GM12878 (cell line): ENCODE measurements at regions of chr4 and their contacts with region 1.

Region 1: DNA sequence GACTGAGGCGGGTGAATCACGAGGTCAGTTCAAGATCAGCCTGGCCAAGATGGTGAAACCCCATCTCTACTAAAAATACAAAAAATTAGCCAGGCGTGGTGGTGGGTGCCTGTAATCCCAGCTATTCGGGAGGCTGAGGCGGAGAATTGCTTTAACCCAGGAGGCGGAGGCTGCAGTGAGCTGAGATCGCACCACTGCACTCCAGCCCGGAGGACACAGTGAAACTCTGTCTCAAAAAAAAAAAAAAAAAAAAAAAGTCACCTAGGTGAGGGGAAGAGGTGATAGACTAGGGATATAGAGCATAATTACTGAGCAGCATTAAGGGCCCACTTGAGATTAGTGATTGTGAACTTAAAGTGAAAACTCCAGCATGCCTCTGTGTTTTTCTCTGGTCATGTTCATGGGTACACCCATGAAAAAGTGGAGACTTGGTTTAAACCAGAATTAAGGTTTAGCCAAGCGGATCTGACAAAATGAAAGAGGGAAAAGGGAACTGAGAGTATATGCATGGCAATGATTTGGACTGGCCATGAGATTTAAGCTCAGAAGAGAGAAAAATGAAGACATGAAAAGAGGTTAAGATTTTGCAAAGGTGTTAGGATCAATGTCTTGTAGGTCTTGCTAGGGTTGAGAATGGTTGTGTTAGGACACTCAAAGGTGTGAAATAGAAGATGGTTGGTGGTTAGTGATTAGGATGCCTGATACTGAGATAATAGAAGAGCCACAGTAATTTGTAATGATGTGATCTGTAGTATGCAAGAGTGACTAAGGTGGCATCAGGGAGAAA is 105.0 kb downstream of the RAB28 start:
- DNase-seq: peak; percentile 24
- ATAC-seq: peak; percentile 98
- H3K4me3 ChIP-seq: no peak overlapping the region
- H3K27ac ChIP-seq: no peak overlapping the region
- H3K4me1 ChIP-seq: no peaks in the 10 kb centered on the region
- H3K27me3 ChIP-seq: no peaks in the 10 kb centered on the region
- CTCF ChIP-seq: no peak
- EP300 ChIP-seq: 0 out of 4 replicates have a peak, but pooled peaks of 1 of the 2 experiments have one; percentile 33
- POLR2A ChIP-seq: no peak
- RAD21 ChIP-seq: no peak

Region 2: DNA sequence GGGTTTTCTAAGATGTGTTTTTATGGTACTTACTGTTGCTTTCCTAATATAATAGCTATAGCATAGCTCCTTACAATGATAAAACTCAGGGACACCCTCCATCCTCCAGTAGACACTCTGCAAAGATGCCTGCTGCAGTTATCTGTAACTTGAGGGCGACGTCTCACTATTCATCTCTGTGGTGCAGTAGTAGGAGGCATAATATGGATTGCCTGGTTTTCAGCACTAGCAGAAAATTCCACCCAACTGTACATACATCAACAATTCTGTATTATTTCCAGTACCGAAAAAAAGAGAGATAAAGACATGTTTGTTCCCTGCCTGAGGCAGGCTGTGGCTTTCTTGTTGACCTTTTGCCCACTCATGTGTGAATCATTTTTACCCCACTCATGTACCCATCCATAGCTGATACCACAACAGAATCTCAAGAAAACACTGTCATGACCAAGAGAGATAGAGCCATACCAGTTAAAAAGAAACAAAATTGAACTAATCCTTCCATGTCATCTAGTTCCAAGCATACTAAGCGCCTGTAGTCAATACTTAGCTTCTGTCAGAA is 115.1 kb before region 1 on chr4:
- CTCF ChIA-PET with region 1: no interaction called
- POLR2A ChIA-PET with region 1: no interaction called
- RAD21 ChIA-PET with region 1: no interaction called
- SMC1A ChIA-PET with region 1: no interaction called
- in situ Hi-C with region 1: no loop called
- intact Hi-C with region 1: no loop called
- DNase-seq: no peak
- ATAC-seq: no peak
- H3K4me3 ChIP-seq: no peak overlapping the region
- H3K27ac ChIP-seq: no peak overlapping the region
- H3K4me1 ChIP-seq: no peaks in the 10 kb centered on the region
- H3K27me3 ChIP-seq: no peaks in the 10 kb centered on the region
- CTCF ChIP-seq: no peak
- EP300 ChIP-seq: no peak
- POLR2A ChIP-seq: no peak
- RAD21 ChIP-seq: no peak

Region 3: DNA sequence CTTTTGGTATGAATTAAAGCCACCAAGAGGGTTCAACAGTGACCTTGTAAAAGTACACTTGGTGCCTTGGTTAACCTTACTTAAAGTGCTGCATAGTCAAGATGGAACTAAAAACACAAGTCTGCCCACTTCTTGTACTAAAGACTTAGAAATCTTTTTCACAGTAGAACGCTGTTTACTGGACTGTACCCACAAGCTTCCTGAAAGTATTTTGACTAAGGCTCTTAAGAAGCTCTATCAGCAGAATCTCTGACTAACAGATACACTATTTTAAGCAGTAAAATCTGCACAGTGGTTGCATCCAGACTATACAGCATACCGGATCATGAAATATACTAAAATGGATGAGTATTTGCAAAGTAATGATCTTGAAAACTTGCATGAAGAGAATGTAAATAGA is 97.7 kb after region 1 on chr4:
- CTCF ChIA-PET with region 1: no interaction called
- POLR2A ChIA-PET with region 1: no interaction called
- RAD21 ChIA-PET with region 1: interaction called, 3 read pairs
- SMC1A ChIA-PET with region 1: no interaction called
- in situ Hi-C with region 1: no loop called
- intact Hi-C with region 1: loop called (anchors 5 kb)
- DNase-seq: no peak
- ATAC-seq: peak; percentile 79
- H3K4me3 ChIP-seq: no peak overlapping the region
- H3K27ac ChIP-seq: no peak overlapping the region
- H3K4me1 ChIP-seq: no peaks in the 10 kb centered on the region
- H3K27me3 ChIP-seq: no peaks in the 10 kb centered on the region
- CTCF ChIP-seq: no peak
- EP300 ChIP-seq: no peak
- POLR2A ChIP-seq: no peak
- RAD21 ChIP-seq: no peak